ENCODE measurements at regions of chr1 and their contacts with region 1.

Region 1: DNA sequence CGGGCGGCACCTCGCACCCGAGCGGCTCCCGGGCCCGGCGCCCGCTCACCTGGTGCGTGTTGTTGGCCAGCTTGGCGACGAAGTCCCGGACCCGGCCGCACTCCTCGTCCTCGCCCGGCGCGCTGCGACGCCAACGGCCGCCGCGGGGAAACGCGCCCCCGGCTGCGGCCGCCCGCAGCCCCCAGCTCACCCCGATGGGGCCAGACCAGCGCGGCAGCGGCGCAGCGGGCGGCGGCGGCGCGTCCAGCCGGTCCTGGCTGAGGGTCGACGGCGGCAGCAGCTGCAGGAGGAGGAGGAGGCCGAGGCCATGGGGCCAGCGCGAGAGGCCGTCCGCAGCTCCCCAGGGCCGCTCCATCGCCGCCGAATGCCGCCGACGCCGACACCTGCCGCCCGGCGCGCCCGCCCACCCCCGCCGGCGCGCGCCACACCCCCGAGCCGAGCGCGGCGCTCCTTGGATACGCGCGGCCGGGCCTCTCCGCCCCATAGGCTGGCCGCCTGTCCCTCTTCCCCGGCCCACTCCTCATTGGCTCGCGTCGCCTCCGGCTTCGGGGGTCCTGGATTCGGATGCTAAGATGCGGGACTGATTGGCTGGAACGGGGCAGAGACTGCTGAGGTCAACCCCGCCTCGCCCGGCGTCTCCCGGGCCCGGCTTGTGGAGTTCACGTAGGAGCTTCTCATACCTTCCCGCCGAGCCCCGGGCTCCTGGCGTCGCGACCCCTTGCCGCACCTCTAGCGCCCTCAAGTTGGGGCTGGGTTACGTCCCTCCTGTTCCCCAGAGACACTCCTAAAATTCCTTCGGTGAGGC is at the start of gene SORT1:
- DNase-seq: peak; percentile 83
- ATAC-seq: peak; percentile 96
- H3K4me3 ChIP-seq: peak within 1 kb of the TSS; percentile 78
- H3K27ac ChIP-seq: peak within 1 kb of the TSS; percentile 74
- H3K4me1 ChIP-seq: peaks cover 12% of the 10 kb centered on the region
- H3K27me3 ChIP-seq: no peaks in the 10 kb centered on the region
- CTCF ChIP-seq: no peak
- POLR2A ChIP-seq: 0 out of 2 replicates have a peak, but pooled peaks have one; percentile 30
- RAD21 ChIP-seq: no peak
- total RNA-seq, gene SORT1: 16.7 and 18.9 TPM in 2 replicates

Region 2: DNA sequence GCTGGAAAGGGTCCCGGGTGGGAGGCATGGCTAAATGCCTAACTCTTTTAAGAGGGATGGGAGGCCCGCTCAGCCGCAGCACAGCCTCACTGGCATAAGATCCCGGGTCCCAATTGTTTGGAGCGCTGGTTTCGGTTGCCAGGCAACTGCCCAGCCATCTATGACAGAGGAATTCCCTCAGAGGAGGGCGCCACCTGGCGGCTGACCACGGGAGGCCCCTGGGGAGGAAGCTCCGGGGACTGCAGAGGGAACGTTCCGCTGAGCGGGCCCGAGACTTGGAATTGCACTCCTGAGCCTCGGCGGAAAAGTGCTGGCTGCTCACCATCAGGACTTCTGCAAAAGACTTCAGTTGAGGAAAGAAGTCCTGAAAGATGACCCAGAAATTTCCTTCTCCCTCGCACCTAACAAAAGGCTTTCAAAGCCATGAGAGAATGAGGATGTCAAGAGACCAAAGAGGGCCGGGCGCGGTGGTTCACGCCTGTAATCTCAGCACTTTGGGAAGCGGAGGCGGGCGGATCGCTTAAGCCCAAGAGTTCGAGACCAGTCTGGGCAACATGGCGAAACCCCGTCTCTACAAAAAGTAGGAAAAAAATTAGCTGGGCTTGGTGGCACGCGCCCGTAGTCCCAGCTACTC is 285.0 kb before region 1 on chr1:
- CTCF ChIA-PET with region 1: interaction called, 3 read pairs
- POLR2A ChIA-PET with region 1: no interaction called
- dilution Hi-C with region 1: no loop called
- in situ Hi-C with region 1: no loop called
- intact Hi-C with region 1: loop called (anchors 2 kb)
- DNase-seq: peak; percentile 85
- ATAC-seq: peak; percentile 94
- H3K4me3 ChIP-seq: no peak overlapping the region
- H3K27ac ChIP-seq: no peak overlapping the region
- H3K4me1 ChIP-seq: peaks cover 2% of the 10 kb centered on the region; the same call in 1 of the 2 replicates
- H3K27me3 ChIP-seq: peaks cover 23% of the 10 kb centered on the region
- CTCF ChIP-seq: peak; percentile 91
- POLR2A ChIP-seq: no peak
- RAD21 ChIP-seq: peak; percentile 68

Region 3: GRCh38 chr1:109277434-109278204 is 120.1 kb before region 1 on chr1:
- CTCF ChIA-PET with region 1: interaction called, 4 read pairs
- POLR2A ChIA-PET with region 1: no interaction called
- dilution Hi-C with region 1: no loop called
- in situ Hi-C with region 1: loop called (anchors 5 kb)
- intact Hi-C with region 1: loop called (anchors 1 kb)
- DNase-seq: peak; percentile 64
- ATAC-seq: peak; percentile 62
- H3K4me3 ChIP-seq: no peak overlapping the region
- H3K27ac ChIP-seq: no peak overlapping the region
- H3K4me1 ChIP-seq: peaks cover 16% of the 10 kb centered on the region
- H3K27me3 ChIP-seq: no peaks in the 10 kb centered on the region
- CTCF ChIP-seq: peak; percentile 72
- POLR2A ChIP-seq: no peak
- RAD21 ChIP-seq: peak; percentile 75

Region 4: DNA sequence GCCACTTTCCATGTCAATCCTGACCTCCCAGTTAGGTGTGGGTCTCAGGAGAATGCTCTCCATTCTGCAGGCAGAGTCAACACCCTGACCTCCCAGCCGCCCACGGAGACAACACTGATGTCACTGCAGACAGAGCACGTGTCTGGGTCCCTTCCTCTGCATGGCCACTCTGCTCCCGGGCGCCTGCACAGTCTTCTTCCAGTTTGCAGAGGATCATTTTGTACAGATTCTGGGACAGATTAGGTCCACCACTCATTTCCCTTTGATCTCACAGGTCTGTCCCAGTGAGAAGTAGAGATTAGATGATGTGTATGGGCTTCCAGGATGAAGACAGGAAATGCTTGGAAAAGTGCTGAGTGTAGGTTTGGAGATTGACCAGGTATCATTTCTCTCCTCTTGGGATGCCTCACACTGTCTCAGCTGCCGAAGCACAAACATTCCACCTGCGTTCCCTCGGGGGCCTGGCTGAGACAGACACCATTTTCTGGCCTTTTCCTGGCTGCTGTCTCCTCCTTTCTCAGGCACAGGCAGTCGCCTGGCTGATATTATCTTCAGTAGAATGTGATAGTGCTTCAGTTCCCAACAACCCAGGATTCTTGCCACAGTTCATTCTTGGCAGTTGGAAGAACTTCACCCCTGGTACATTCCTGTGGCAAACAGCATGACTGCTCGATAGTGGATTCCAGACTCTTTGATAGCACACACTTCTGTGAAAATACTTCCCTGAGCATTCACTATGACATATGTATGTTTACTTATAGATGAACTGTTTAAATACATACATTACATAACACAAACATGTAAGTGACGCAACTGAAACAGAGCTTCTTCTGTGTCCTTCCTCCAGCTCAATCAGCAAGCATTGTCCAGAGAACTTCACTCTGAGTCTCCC is 98.8 kb before region 1 on chr1:
- CTCF ChIA-PET with region 1: no interaction called
- POLR2A ChIA-PET with region 1: no interaction called
- dilution Hi-C with region 1: no loop called
- in situ Hi-C with region 1: no loop called
- intact Hi-C with region 1: loop called (anchors 5 kb)
- DNase-seq: peak; percentile 97
- ATAC-seq: peak; percentile 87
- H3K4me3 ChIP-seq: no peak overlapping the region
- H3K27ac ChIP-seq: peak overlapping the region; percentile 86
- H3K4me1 ChIP-seq: peaks cover 26% of the 10 kb centered on the region
- H3K27me3 ChIP-seq: no peaks in the 10 kb centered on the region
- CTCF ChIP-seq: no peak
- POLR2A ChIP-seq: no peak
- RAD21 ChIP-seq: no peak

Region 5: DNA sequence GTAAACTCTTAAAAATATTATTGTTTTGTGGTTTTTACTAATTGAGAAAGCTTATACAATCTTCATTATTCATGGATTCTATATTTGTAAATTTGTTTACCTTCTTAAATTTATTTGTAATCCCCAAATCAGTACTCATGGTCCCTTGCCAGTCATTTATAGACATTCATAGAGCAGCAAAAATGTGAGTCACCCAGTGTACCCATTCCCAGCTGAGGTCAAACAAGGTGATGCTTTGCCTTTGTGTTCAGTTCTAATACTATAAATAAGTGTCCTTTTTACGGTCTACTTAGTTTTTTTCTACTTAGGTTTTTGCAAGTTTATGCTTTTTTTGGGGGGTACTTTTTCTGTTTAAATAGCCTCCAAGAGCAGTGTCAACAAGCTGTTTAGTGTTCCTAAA is 36.1 kb before region 1 on chr1:
- CTCF ChIA-PET with region 1: interaction called, 3 read pairs
- POLR2A ChIA-PET with region 1: no interaction called
- dilution Hi-C with region 1: no loop called
- in situ Hi-C with region 1: no loop called
- intact Hi-C with region 1: loop called (anchors 2 kb)
- DNase-seq: peak; percentile 40
- ATAC-seq: 0 out of 2 replicates have a peak, but pooled peaks have one; percentile 38
- H3K4me3 ChIP-seq: no peak overlapping the region
- H3K27ac ChIP-seq: no peak overlapping the region; the same call in 1 of the 2 replicates
- H3K4me1 ChIP-seq: peaks cover 6% of the 10 kb centered on the region; the same call in 1 of the 2 replicates
- H3K27me3 ChIP-seq: no peaks in the 10 kb centered on the region
- CTCF ChIP-seq: no peak
- POLR2A ChIP-seq: no peak
- RAD21 ChIP-seq: no peak

Region 6: GRCh38 chr1:109617291-109617863 is 219.6 kb after region 1 on chr1:
- CTCF ChIA-PET with region 1: no interaction called
- POLR2A ChIA-PET with region 1: no interaction called
- dilution Hi-C with region 1: no loop called
- in situ Hi-C with region 1: no loop called
- intact Hi-C with region 1: no loop called
- DNase-seq: peak; percentile 97
- ATAC-seq: peak; percentile 19
- H3K4me3 ChIP-seq: no peak overlapping the region
- H3K27ac ChIP-seq: peak overlapping the region; percentile 77
- H3K4me1 ChIP-seq: peaks cover 36% of the 10 kb centered on the region
- H3K27me3 ChIP-seq: no peaks in the 10 kb centered on the region
- CTCF ChIP-seq: no peak
- POLR2A ChIP-seq: no peak; the same call in 1 of the 2 replicates
- RAD21 ChIP-seq: peak; percentile 18; the same call in 1 of the 2 replicates

Measured in IMR-90 (cell line).